Caco-2 (cell line): ENCODE measurements at regions of chr11 and their contacts with region 1.

Region 1: DNA sequence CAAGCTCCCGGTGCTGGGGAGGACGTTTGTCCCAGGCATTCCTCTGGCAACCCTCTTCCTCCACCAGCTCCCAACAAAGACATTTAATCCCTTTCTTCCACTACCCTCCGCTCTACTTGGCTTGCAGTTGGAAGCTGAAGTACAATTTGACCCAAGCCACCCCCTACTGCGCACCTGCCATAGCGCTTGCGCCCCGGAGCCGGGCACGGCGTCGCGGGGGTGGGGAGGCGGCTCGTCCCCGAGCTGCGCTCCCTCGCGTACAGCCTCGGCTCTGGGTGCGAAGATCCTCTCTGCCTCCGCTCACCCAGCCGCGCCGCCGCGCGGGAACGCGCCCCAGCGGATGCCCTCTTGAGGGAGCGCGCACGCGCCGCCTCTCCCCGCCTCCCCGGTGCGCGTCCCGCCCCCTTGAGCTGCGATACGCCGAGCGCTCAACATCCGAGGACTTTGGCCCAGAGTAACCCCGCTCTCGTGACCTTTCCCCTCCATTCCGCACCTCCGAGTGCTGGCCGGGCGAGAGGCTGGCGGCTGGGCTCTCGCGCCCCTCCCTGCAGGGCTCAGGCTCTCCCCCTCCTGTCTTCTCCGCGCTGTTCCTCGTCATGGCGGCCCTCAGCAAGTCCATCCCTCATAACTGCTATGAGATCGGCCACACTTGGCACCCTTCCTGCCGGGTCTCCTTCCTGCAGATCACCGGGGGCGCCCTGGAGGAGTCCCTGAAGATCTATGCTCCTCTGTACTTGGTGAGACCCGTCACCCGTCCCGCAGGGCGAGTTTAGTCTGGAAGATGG is at the start of gene TMEM135:
- DNase-seq: peak; percentile 99 to 100
- H3K4me3 ChIP-seq: peak within 1 kb of the TSS; percentile 83
- H3K4me3 Mint-ChIP-seq: peak within 1 kb of the TSS; percentile 97
- H3K27ac Mint-ChIP-seq: peak within 1 kb of the TSS; percentile 81
- H3K4me1 ChIP-seq: peaks cover 11% of the 10 kb centered on the region
- H3K4me1 Mint-ChIP-seq: peaks cover 59% of the 10 kb centered on the region
- H3K27me3 ChIP-seq: no peaks in the 10 kb centered on the region
- H3K27me3 Mint-ChIP-seq: no peaks in the 10 kb centered on the region
- CTCF ChIP-seq: peak in 1 of 2 experiments; percentile 62
- total RNA-seq, gene TMEM135: 88.6 and 95.2 TPM in 2 replicates

Region 2: GRCh38 chr11:86938900-86939880 is 98.5 kb before region 1 on chr11:
- CTCF ChIA-PET with region 1: interaction called, 25 read pairs
- POLR2A ChIA-PET with region 1: interaction called, 7 read pairs
- intact Hi-C with region 1: loop called (anchors 2 kb)
- DNase-seq: peak in 1 of 2 experiments; percentile 75
- H3K4me3 ChIP-seq: no peak overlapping the region
- H3K4me3 Mint-ChIP-seq: peak overlapping the region; percentile 60
- H3K27ac Mint-ChIP-seq: peak overlapping the region; percentile 84
- H3K4me1 ChIP-seq: peaks cover 51% of the 10 kb centered on the region
- H3K4me1 Mint-ChIP-seq: peaks cover 52% of the 10 kb centered on the region
- H3K27me3 ChIP-seq: no peaks in the 10 kb centered on the region
- H3K27me3 Mint-ChIP-seq: no peaks in the 10 kb centered on the region
- CTCF ChIP-seq: peak; percentile 79 to 83

Region 3: DNA sequence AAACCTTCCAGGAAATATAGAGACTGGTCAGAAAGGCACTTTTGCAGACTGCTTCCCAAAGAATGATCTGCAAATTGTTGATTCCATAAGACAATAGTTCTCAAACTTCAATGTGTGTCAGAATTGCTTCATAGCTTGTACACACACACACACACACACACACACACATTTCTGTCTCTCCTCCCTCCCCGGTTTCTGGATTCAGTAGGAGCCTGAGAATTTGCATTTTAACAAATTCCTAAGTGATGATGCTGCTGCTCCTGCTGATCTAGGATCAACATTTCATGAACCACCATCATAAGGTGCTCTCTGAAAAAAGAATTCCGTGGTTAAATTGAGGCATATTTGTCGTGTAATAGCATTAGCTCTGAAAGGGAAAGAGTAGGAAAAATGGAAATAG is 47.1 kb before region 1 on chr11:
- CTCF ChIA-PET with region 1: interaction called, 20 read pairs
- POLR2A ChIA-PET with region 1: interaction called, 7 read pairs
- intact Hi-C with region 1: no loop called
- DNase-seq: peak; percentile 58 to 70
- H3K4me3 ChIP-seq: no peak overlapping the region
- H3K4me3 Mint-ChIP-seq: no peak overlapping the region
- H3K27ac Mint-ChIP-seq: peak overlapping the region; percentile 8
- H3K4me1 ChIP-seq: peaks cover 28% of the 10 kb centered on the region
- H3K4me1 Mint-ChIP-seq: peaks cover 37% of the 10 kb centered on the region
- H3K27me3 ChIP-seq: no peaks in the 10 kb centered on the region
- H3K27me3 Mint-ChIP-seq: no peaks in the 10 kb centered on the region
- CTCF ChIP-seq: no peak